H1 (cell line): ENCODE measurements at regions of chr11 and their contacts with region 1.

Region 1: GRCh38 chr11:108035690-108036089 is 27.0 kb downstream of the CUL5 start:
- DNase-seq: no peak
- H3K4me3 ChIP-seq: no peak overlapping the region
- H3K27ac ChIP-seq: no peak overlapping the region
- H3K4me1 ChIP-seq: peaks cover 0 to 4% (median 1%) of the 10 kb centered on the region in 4 experiments; a peak in 2 of 7 replicates
- H3K27me3 ChIP-seq: no peaks in the 10 kb centered on the region
- CTCF ChIP-seq: no peak
- EP300 ChIP-seq: no peak
- POLR2A ChIP-seq: no peak
- RAD21 ChIP-seq: no peak

Region 2: DNA sequence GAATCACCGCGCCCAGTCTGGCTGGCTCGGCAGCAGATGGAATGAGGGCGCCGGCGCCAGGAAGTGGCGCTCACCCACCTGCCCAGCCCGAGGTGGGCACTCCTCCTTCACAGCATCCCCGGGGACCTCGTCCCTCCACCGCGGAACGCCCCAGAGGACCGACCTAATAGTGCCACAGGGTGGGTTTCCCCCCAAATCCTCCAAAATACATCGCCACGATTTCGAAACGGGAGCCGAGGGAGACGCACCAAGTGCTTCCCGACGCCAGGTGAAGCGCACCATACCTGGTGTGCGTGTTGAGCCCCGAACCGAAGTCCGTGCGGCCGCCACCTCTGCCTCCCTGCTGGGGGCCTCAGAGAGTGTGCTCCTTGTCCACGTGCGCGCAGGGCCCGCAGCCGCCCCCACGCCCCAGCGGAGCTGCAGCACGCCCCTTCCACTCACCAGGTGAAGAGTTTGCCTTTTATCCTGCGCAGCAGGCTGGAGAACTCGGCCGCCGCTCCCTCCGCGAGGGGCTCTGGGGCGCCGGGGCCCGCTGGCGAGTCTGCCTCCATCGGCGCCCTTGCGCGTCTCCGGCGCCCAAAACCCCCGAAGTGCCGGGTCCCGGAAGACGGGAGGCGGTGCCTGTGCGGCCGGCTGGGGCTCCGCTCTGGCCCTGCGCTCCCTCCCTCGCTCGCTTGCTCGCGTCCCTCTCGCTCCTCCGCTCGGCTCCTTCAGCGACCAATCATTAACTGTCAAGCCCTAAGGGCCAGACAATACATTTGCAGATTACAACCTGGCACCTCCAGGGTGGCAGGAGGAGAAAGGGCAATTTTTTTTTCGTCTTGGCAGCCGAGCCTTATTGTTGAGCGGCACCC is 177.2 kb before region 1 on chr11 and contains the start of gene SLC35F2:
- CTCF ChIA-PET with region 1: no interaction called
- POLR2A ChIA-PET with region 1: no interaction called
- DNase-seq: peak; percentile 47 to 85
- H3K4me3 ChIP-seq: peak within 1 kb of the TSS; percentile 80 to 88 (median 85)
- H3K27ac ChIP-seq: peak within 1 kb of the TSS; percentile 11; the same call in 1 of the 2 replicates
- H3K4me1 ChIP-seq: peaks cover 2 to 6% (median 5%) of the 10 kb centered on the region in 4 experiments; a peak in 4 of 7 replicates
- H3K27me3 ChIP-seq: peaks cover 0 to 9% (median 5%) of the 10 kb centered on the region in 4 experiments; a peak in 4 of 7 replicates
- CTCF ChIP-seq: no peak
- EP300 ChIP-seq: no peak
- POLR2A ChIP-seq: no peak
- RAD21 ChIP-seq: no peak
- total RNA-seq, gene SLC35F2: 28.0 and 29.7 TPM in 2 replicates

Region 3: DNA sequence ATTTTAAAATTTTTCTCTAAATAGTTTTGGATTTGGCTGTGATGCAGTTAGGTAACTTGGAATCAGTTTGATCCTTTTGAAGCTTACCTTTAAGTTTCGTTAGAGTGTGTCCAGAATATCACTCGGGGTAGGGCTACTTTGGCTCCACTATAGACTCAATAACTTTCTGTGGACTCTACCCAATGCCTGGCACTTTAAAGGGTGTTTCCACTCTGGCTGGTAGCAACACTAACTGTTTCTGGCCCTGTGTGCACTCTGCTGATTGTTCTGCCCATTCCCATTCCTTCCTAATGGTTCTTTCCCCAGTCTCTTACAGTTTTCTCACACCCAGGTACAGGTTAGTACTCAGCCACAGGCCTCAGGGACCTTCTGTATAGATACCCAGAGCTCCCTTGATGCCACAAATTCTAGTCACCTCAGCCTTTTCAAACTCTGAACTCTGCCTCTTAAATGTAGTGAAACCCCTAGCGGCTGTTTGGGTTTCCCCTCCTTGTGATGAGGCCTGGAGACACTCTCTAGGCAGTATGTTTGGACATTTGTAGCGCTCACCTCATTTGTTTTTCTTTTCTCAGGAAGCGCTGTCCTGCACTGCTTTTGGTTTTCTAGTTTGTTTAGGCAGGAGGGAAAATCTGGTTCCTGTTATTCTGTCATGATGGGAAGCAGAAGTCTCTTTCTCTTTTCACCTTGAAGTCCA is 10.2 kb before region 1 on chr11:
- CTCF ChIA-PET with region 1: interaction called, 16 read pairs
- POLR2A ChIA-PET with region 1: no interaction called
- DNase-seq: no peak
- H3K4me3 ChIP-seq: no peak overlapping the region
- H3K27ac ChIP-seq: no peak overlapping the region
- H3K4me1 ChIP-seq: no peaks in the 10 kb centered on the region
- H3K27me3 ChIP-seq: no peaks in the 10 kb centered on the region
- CTCF ChIP-seq: no peak
- EP300 ChIP-seq: no peak
- POLR2A ChIP-seq: no peak
- RAD21 ChIP-seq: no peak

Region 4: DNA sequence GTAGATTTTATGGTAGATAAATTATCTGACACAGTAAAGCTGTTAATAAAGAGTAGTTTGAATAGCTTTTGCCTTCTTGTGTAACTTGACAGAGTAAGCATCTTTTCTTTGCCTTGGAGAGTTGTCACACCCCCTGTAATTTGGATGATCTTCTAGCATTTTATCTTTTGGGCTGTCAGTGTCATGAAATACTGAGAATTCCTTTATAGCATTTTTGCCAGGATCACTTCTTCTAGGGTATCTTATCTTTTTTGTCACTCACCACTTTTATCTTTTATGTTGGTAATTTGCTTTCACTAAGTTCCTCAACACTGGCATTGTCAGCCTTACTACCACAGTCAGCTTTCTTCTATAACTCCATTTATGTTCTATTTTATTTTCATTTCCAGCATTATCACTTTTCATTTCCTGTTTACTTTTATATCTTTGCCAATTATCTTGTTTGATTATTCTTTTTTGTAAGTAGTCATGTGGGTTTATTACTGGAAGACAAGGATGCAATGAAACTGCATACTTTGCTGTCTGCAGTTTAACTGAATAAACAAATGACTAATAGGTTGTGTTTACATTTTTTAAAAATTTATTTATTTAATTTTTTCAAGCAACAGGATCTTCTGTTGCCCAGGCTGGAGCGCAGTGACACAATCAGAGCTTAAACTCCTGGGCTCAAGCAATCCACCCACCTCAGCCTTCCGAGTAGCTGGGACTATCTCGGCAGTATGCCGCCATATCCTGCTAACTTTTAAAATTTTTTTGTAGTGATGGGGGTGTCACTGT is 57.6 kb after region 1 on chr11:
- CTCF ChIA-PET with region 1: no interaction called
- POLR2A ChIA-PET with region 1: no interaction called
- DNase-seq: no peak
- H3K4me3 ChIP-seq: no peak overlapping the region
- H3K27ac ChIP-seq: no peak overlapping the region
- H3K4me1 ChIP-seq: no peaks in the 10 kb centered on the region
- H3K27me3 ChIP-seq: no peaks in the 10 kb centered on the region
- CTCF ChIP-seq: no peak
- EP300 ChIP-seq: no peak
- POLR2A ChIP-seq: no peak
- RAD21 ChIP-seq: no peak